Activated T-helper 1 cell treated with anti-CD3 and anti-CD28 coated beads, Interleukin-12 subunit alpha, Interleukin-12 subunit beta, Interleukin-2, Interleukin-4 antibody, amounts not matched to agents 30 ng/mL and 10 ng/mL and 1 ng/mL, durations not matched to agents 14 hours and 24 hours and 36 hours (primary cell): ENCODE measurements at regions of chr9 and their contacts with region 1.

Region 1: DNA sequence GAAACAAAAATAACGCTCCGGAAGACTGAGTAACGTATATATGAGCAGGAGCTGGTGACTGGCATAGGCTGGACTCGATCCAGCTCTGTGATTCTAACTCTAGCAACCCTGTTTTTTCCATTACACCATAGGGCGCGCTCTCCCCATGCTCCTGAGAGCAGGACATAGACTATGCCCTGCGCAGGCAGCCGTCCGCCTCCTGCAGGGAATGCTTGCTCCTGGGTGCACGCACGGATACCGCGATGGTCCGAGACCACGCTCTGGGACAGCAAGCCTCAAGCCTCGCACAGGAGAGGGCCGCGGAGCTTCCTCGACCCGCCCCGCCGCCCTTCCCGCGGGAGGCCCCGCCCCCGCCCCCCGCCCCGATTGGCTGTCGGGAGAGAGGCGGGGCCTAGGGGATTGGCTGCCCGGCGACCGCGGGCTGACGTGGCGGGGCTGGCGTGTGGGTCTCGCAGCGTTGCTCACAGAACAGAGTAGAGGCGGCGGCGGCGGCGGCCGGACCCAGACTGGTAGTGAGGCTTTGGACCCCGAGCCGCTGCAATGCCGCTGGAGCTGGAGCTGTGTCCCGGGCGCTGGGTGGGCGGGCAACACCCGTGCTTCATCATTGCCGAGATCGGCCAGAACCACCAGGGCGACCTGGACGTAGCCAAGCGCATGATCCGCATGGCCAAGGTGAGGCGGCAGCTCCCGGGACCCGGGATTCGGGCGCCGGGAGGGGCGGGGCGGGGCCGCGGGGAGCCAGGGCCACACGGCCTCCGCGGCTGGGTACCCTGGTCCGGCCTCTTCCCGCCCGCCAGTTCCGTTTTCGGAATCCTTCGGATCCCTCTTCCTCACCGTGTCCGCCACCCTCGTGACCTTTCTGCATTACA is at the start of gene NANS:
- DNase-seq: peak; percentile 90
- H3K4me3 Mint-ChIP-seq: peak within 1 kb of the TSS; percentile 98
- H3K27ac Mint-ChIP-seq: peak within 1 kb of the TSS; percentile 97
- H3K4me1 Mint-ChIP-seq: peaks cover 33% of the 10 kb centered on the region
- H3K27me3 Mint-ChIP-seq: no peaks in the 10 kb centered on the region
- total RNA-seq, gene NANS: 54.4 and 55.5 TPM in 2 replicates

Region 2: GRCh38 chr9:98045234-98046179 is 11.0 kb before region 1 on chr9:
- intact Hi-C with region 1: loop called (anchors 1 kb)
- DNase-seq: peak; percentile 38
- H3K4me3 Mint-ChIP-seq: peak overlapping the region; percentile 87
- H3K27ac Mint-ChIP-seq: peak overlapping the region; percentile 86
- H3K4me1 Mint-ChIP-seq: peaks cover 41% of the 10 kb centered on the region
- H3K27me3 Mint-ChIP-seq: peaks cover 6% of the 10 kb centered on the region

Region 3: GRCh38 chr9:98101868-98102273 is 45.4 kb after region 1 on chr9:
- intact Hi-C with region 1: loop called (anchors 1 kb)
- DNase-seq: peak; percentile 83
- H3K4me3 Mint-ChIP-seq: peak overlapping the region; percentile 69
- H3K27ac Mint-ChIP-seq: peak overlapping the region; percentile 88
- H3K4me1 Mint-ChIP-seq: peaks cover 85% of the 10 kb centered on the region
- H3K27me3 Mint-ChIP-seq: no peaks in the 10 kb centered on the region

Region 4: DNA sequence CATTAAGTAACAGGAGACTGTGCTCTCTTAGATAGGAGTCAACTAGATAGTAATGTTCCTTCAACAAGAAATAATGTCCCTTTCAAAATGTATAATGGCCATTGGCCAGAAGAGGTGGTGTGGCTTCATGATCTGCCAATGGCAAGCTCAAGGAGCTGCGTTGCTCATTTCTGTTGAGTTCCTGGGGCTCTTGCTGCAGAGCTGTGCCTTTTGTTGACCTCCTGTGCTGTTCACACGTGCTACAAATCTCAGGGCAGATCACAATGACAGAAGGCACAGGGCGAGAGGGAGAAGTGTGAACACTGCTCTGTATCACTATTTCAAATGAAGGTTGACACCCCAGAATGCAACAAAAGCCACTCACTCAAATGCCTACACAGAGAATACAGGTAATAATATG is 215.0 kb after region 1 on chr9:
- intact Hi-C with region 1: no loop called
- DNase-seq: no peak
- H3K4me3 Mint-ChIP-seq: no peak overlapping the region
- H3K27ac Mint-ChIP-seq: no peak overlapping the region
- H3K4me1 Mint-ChIP-seq: no peaks in the 10 kb centered on the region
- H3K27me3 Mint-ChIP-seq: peaks cover 21% of the 10 kb centered on the region